Activated CD4-positive, alpha-beta T cell treated with anti-CD3 and anti-CD28 coated beads for 36 hours (primary cell): ENCODE measurements at regions of chr17 and their contacts with region 1.

Region 1: GRCh38 chr17:65231662-65232335 is 94.6 kb downstream of the RGS9 start:
- DNase-seq: peak; percentile 70
- ATAC-seq: peak; percentile 25
- H3K4me3 Mint-ChIP-seq: no peak overlapping the region
- H3K27ac Mint-ChIP-seq: no peak overlapping the region
- H3K4me1 Mint-ChIP-seq: peaks cover 31% of the 10 kb centered on the region
- H3K27me3 Mint-ChIP-seq: peaks cover 10% of the 10 kb centered on the region

Region 2: GRCh38 chr17:65181237-65182061 is 50.4 kb before region 1 on chr17:
- CTCF ChIA-PET with region 1: interaction called, 5 read pairs
- POLR2A ChIA-PET with region 1: no interaction called
- intact Hi-C with region 1: loop called (anchors 1 kb)
- DNase-seq: peak; percentile 71
- ATAC-seq: peak; percentile 77
- H3K4me3 Mint-ChIP-seq: no peak overlapping the region
- H3K27ac Mint-ChIP-seq: peak overlapping the region; percentile 75
- H3K4me1 Mint-ChIP-seq: peaks cover 54% of the 10 kb centered on the region
- H3K27me3 Mint-ChIP-seq: peaks cover 9% of the 10 kb centered on the region

Region 3: GRCh38 chr17:65294179-65294720 is 62.5 kb after region 1 on chr17:
- CTCF ChIA-PET with region 1: interaction called, 14 read pairs
- POLR2A ChIA-PET with region 1: no interaction called
- intact Hi-C with region 1: loop called in 1 of 2 experiments (anchors 2 kb)
- DNase-seq: peak; percentile 76
- ATAC-seq: peak; percentile 95
- H3K4me3 Mint-ChIP-seq: no peak overlapping the region
- H3K27ac Mint-ChIP-seq: no peak overlapping the region
- H3K4me1 Mint-ChIP-seq: peaks cover 2% of the 10 kb centered on the region
- H3K27me3 Mint-ChIP-seq: no peaks in the 10 kb centered on the region

Region 4: DNA sequence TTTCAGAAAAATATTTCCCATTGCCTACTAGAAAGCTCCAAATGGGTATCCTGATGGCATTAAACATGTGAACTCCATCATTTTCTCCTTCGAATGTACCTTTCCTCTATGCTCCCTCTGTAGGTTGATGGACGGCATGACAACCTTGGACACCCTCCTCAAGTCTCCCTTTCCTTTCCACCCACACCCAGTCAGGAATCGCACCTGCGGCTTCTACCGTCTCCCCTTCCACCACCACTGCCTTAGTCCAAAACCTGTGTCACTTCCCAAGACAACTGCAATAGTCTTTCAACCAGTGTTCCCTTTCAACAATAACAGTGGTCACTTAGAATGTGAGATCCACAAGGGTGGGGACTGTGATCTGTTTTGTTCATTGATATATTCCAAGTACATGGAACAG is 562.8 kb after region 1 on chr17:
- CTCF ChIA-PET with region 1: no interaction called
- POLR2A ChIA-PET with region 1: no interaction called
- intact Hi-C with region 1: loop called in 1 of 2 experiments (anchors 2 kb)
- DNase-seq: no peak
- ATAC-seq: no peak
- H3K4me3 Mint-ChIP-seq: no peak overlapping the region
- H3K27ac Mint-ChIP-seq: no peak overlapping the region
- H3K4me1 Mint-ChIP-seq: peaks cover 12% of the 10 kb centered on the region
- H3K27me3 Mint-ChIP-seq: peaks cover 2% of the 10 kb centered on the region

Region 5: DNA sequence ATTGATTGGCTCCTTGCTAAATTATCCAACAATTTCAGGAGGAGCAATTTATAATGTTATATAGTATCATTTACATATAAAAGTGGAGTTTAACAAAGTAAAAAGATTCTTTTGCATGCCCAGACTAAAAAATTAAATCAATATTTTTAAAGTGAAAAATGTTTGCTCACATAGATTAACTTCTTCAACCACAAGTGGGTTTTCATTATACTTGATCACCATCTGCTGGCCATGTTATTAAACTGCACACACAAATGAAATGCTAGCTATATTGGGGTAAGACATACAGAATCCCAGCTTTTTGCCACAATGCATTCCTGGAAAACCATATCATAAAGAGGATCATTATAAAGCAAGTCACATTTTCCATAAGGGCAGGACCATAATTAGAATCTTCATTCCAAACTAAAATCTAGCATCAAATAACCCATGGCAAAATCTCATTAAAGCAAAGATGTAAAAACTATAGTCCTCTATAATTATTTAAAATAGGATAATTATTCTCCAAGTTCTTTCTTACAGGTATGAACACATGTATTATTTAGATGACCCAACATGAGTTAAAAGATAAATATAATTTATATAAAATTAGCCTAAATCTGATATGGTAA is 933.8 kb after region 1 on chr17:
- CTCF ChIA-PET with region 1: interaction called, 24 read pairs
- POLR2A ChIA-PET with region 1: no interaction called
- intact Hi-C with region 1: loop called (anchors 1 to 2 kb)
- DNase-seq: no peak
- ATAC-seq: no peak
- H3K4me3 Mint-ChIP-seq: no peak overlapping the region
- H3K27ac Mint-ChIP-seq: no peak overlapping the region
- H3K4me1 Mint-ChIP-seq: peaks cover 10% of the 10 kb centered on the region
- H3K27me3 Mint-ChIP-seq: no peaks in the 10 kb centered on the region